IMR-90 (cell line): ENCODE measurements at regions of chr9 and their contacts with region 1.

Region 1: DNA sequence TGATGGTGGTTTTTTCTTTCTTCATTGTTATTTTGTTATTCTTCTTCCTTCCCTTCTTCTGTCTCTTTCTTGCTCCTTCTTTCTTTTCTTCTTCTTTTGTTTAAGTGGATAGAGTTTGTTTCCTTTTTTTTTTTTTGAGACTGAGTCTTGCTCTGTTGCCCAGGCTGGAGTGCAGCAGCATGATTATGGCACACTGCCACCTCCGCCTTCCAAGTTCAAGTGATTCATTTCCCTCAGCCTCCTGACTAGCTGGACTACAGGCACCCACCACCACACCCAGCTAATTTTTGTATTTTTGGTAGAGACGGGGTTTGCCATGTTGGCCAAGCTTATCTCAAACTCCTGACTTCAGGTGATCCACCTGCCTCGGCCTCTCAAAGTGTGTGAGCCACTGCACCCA is 40.3 kb downstream of the JAK2 start:
- DNase-seq: peak; percentile 2
- ATAC-seq: no peak
- H3K4me3 ChIP-seq: no peak overlapping the region
- H3K27ac ChIP-seq: no peak overlapping the region
- H3K4me1 ChIP-seq: no peaks in the 10 kb centered on the region
- H3K27me3 ChIP-seq: no peaks in the 10 kb centered on the region
- CTCF ChIP-seq: no peak
- POLR2A ChIP-seq: no peak
- RAD21 ChIP-seq: no peak

Region 2: GRCh38 chr9:4197548-4197947 is 827.9 kb before region 1 on chr9:
- CTCF ChIA-PET with region 1: no interaction called
- POLR2A ChIA-PET with region 1: no interaction called
- dilution Hi-C with region 1: no loop called
- in situ Hi-C with region 1: no loop called
- intact Hi-C with region 1: no loop called
- DNase-seq: no peak
- ATAC-seq: no peak
- H3K4me3 ChIP-seq: no peak overlapping the region
- H3K27ac ChIP-seq: no peak overlapping the region
- H3K4me1 ChIP-seq: no peaks in the 10 kb centered on the region; the same call in 1 of the 2 replicates
- H3K27me3 ChIP-seq: no peaks in the 10 kb centered on the region
- CTCF ChIP-seq: no peak
- POLR2A ChIP-seq: no peak
- RAD21 ChIP-seq: 0 out of 2 replicates have a peak, but pooled peaks have one; percentile 26

Region 3: GRCh38 chr9:4827224-4827623 is 198.2 kb before region 1 on chr9:
- CTCF ChIA-PET with region 1: no interaction called
- POLR2A ChIA-PET with region 1: interaction called, 23 read pairs
- dilution Hi-C with region 1: no loop called
- in situ Hi-C with region 1: no loop called
- intact Hi-C with region 1: no loop called
- DNase-seq: no peak
- ATAC-seq: no peak
- H3K4me3 ChIP-seq: no peak overlapping the region
- H3K27ac ChIP-seq: no peak overlapping the region
- H3K4me1 ChIP-seq: peaks cover 18% of the 10 kb centered on the region
- H3K27me3 ChIP-seq: no peaks in the 10 kb centered on the region
- CTCF ChIP-seq: no peak
- POLR2A ChIP-seq: no peak
- RAD21 ChIP-seq: no peak

Region 4: GRCh38 chr9:4984621-4985385 is 40.6 kb before region 1 on chr9 and contains the start of gene JAK2:
- CTCF ChIA-PET with region 1: no interaction called
- POLR2A ChIA-PET with region 1: no interaction called
- dilution Hi-C with region 1: no loop called
- in situ Hi-C with region 1: no loop called
- intact Hi-C with region 1: no loop called
- DNase-seq: peak; percentile 93
- ATAC-seq: peak; percentile 89
- H3K4me3 ChIP-seq: peak within 1 kb of the TSS; percentile 64
- H3K27ac ChIP-seq: peak within 1 kb of the TSS; percentile 95
- H3K4me1 ChIP-seq: 0 out of 2 replicates have a peak, but pooled peaks cover 4% of the 10 kb centered on the region
- H3K27me3 ChIP-seq: no peaks in the 10 kb centered on the region
- CTCF ChIP-seq: peak; percentile 57
- POLR2A ChIP-seq: peak; percentile 55
- RAD21 ChIP-seq: peak; percentile 37
- total RNA-seq, gene JAK2: 6.1 and 7.2 TPM in 2 replicates